AG04450 (cell line): ENCODE measurements at regions of chr3 and their contacts with region 1.

Region 1: GRCh38 chr3:115092220-115092791 is 54.8 kb downstream of the ZBTB20 start:
- DNase-seq: peak; percentile 42
- H3K4me3 ChIP-seq: no peak overlapping the region
- H3K27ac ChIP-seq: no peak overlapping the region
- H3K27me3 ChIP-seq: no peaks in the 10 kb centered on the region
- CTCF ChIP-seq: peak; percentile 97

Region 2: DNA sequence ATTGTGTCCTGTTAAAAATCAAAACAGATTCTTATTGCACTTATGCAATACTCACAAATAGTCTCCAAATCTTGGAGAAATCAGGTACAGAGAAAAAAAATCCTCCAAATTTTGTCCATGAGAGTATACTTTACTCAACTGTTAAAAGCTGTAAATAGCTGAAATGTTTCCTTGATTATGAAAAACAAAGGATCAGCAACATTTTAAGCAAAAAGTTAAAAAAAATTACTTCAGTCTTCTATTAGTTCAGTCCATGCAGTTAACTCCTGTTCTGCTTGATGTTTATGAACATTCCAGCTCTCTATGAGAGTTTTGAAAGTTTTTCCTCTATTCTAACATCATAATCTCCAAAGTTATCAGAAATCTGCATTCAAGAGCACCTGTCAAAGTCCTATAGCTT is 832.2 kb before region 1 on chr3:
- CTCF ChIA-PET with region 1: interaction called, 12 read pairs
- POLR2A ChIA-PET with region 1: no interaction called
- DNase-seq: no peak
- H3K4me3 ChIP-seq: no peak overlapping the region
- H3K27ac ChIP-seq: no peak overlapping the region
- H3K27me3 ChIP-seq: no peaks in the 10 kb centered on the region
- CTCF ChIP-seq: no peak

Region 3: GRCh38 chr3:114362815-114363214 is 729.5 kb before region 1 on chr3:
- CTCF ChIA-PET with region 1: interaction called, 10 read pairs
- POLR2A ChIA-PET with region 1: no interaction called
- DNase-seq: no peak
- H3K4me3 ChIP-seq: no peak overlapping the region
- H3K27ac ChIP-seq: no peak overlapping the region
- H3K27me3 ChIP-seq: no peaks in the 10 kb centered on the region
- CTCF ChIP-seq: peak; percentile 51

Region 4: DNA sequence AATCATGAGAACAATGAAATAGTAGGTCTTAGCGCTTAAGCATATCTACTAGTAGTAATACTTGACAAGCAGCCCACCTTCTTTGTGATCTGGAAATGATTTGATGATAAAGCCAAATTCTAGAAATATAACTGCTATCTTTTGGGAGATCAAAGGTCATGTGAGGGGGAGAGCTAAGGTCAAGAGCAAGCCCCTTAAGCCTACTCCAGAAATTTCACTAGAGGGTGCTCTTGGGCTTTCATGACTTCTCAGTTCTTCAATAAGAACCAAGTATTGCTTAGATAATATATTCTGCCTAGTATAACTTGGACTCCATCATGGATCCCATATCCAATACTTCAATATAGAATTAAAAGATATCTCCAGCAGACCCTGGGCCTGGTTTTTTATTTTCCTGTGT is 264.8 kb before region 1 on chr3:
- CTCF ChIA-PET with region 1: interaction called, 13 read pairs
- POLR2A ChIA-PET with region 1: no interaction called
- DNase-seq: no peak
- H3K4me3 ChIP-seq: no peak overlapping the region
- H3K27ac ChIP-seq: no peak overlapping the region
- H3K27me3 ChIP-seq: no peaks in the 10 kb centered on the region
- CTCF ChIP-seq: peak; percentile 70

Region 5: GRCh38 chr3:115040673-115041286 is 51.5 kb before region 1 on chr3:
- CTCF ChIA-PET with region 1: interaction called, 15 read pairs
- POLR2A ChIA-PET with region 1: no interaction called
- DNase-seq: peak; percentile 4
- H3K4me3 ChIP-seq: no peak overlapping the region
- H3K27ac ChIP-seq: no peak overlapping the region
- H3K27me3 ChIP-seq: no peaks in the 10 kb centered on the region
- CTCF ChIP-seq: peak; percentile 73

Region 6: DNA sequence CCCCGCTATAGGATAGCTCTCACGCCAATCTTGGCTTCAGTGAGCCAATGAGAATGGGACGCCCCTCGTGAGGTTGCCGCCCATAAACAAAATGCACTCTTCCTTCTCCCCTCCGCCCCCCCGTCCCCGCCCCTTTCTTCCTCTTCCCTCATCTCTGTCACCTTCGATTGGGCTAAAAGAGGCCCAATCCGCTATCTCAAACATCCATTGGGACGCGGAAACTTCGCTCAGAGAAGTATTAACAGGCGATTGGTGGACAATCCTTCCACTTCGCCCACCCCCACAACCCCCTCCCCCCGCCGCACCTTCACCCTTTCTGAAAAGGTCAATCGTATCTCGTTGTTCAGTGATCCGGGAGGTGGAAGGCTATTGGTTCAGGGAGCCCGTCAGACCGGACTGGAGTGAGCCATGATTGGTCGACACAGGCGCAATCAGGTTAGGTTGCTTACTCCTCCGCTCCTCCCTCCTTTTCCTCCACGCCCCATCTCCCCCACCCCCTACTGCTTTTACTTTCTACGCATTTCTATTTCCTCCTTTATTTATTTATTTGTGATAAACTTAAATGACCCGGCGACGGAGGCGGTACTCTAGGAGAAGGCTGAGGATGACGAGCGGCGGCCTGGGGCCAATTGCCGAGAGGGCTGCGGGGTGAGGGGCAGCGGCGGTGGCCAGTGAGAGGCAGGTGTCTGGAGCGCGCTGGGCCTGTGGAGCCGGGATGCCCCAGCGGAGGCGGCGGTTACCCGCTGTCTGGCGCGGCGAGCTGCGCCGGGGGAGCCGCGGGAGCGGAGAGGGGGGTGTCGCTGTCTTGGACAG is 55.2 kb after region 1 on chr3:
- CTCF ChIA-PET with region 1: interaction called, 4 read pairs
- POLR2A ChIA-PET with region 1: interaction called, 11 read pairs
- DNase-seq: peak; percentile 100
- H3K4me3 ChIP-seq: peak overlapping the region; percentile 74
- H3K27ac ChIP-seq: peak overlapping the region; percentile 89
- H3K27me3 ChIP-seq: no peaks in the 10 kb centered on the region
- CTCF ChIP-seq: no peak